Thyroid gland (tissue), 4 donors: ENCODE measurements at regions of chr12 and their contacts with region 1.

Region 1: GRCh38 chr12:54993161-54993835 is 8.7 kb upstream of the TESPA1 start:
- DNase-seq: peak; percentile 32 to 37
- H3K4me3 ChIP-seq: no peak overlapping the region
- H3K27ac ChIP-seq: no peak overlapping the region
- H3K4me1 ChIP-seq: peaks cover 8 to 13% of the 10 kb centered on the region in 2 donors
- H3K27me3 ChIP-seq: no peaks in the 10 kb centered on the region
- CTCF ChIP-seq: peak; percentile 60 to 90 (median 84)
- POLR2A ChIP-seq: no peak

Region 2: GRCh38 chr12:54933376-54933775 is 59.9 kb before region 1 on chr12:
- intact Hi-C with region 1: no loop called
- DNase-seq: no peak
- H3K4me3 ChIP-seq: no peak overlapping the region
- H3K27ac ChIP-seq: no peak overlapping the region
- H3K4me1 ChIP-seq: no peaks in the 10 kb centered on the region
- H3K27me3 ChIP-seq: no peaks in the 10 kb centered on the region
- CTCF ChIP-seq: no peak
- POLR2A ChIP-seq: no peak

Region 3: GRCh38 chr12:55073043-55074022 is 80.0 kb after region 1 on chr12:
- intact Hi-C with region 1: loop called (anchors 5 kb)
- DNase-seq: peak; percentile 66 to 76
- H3K4me3 ChIP-seq: no peak overlapping the region
- H3K27ac ChIP-seq: no peak overlapping the region
- H3K4me1 ChIP-seq: no peaks in the 10 kb centered on the region
- H3K27me3 ChIP-seq: no peaks in the 10 kb centered on the region
- CTCF ChIP-seq: peak; percentile 53 to 88 (median 74)
- POLR2A ChIP-seq: no peak